Endothelial cell of umbilical vein (primary cell): ENCODE measurements at regions of chr5 and their contacts with region 1.

Region 1: GRCh38 chr5:178496642-178497041 is 93.6 kb downstream of the COL23A1 start:
- DNase-seq: peak; percentile 64
- H3K4me3 ChIP-seq: no peak overlapping the region
- H3K27ac ChIP-seq: peak overlapping the region; percentile 70
- H3K4me1 ChIP-seq: peaks cover 9% of the 10 kb centered on the region
- H3K27me3 ChIP-seq: no peaks in the 10 kb centered on the region
- CTCF ChIP-seq: no peak
- POLR2A ChIP-seq: no peak

Region 2: DNA sequence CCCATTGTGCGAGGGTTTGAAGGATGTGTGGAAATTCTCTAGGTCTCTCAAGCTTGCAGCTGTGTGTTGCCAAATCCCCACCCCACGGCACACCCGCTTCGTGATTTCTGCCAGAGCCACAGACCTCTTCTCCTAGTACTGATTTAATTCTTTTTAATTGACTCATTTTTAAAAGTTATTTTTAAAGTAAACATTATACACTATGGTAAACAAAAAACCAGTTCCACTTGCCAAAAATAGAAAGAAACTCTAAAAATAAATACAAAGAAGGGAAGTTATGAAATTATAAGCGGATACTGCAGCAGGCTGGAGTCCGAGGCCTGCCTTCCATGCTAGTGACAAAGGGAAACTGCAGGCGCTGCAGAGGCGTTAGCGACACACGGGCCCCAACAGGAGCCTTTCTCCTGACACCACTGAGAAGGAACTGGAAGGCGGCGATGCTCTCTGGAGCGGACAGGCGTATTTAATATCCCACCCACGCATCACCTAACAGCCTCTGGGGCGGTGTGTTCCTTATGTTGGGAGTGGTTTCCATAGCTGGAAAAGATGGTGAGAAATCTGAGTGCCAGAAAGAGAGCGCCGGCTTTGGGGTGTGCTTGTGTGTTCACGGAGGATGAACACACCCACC is 29.0 kb before region 1 on chr5:
- CTCF ChIA-PET with region 1: no interaction called
- POLR2A ChIA-PET with region 1: no interaction called
- dilution Hi-C with region 1: no loop called
- intact Hi-C with region 1: loop called (anchors 1 kb)
- DNase-seq: peak; percentile 29
- H3K4me3 ChIP-seq: no peak overlapping the region
- H3K27ac ChIP-seq: no peak overlapping the region
- H3K4me1 ChIP-seq: no peaks in the 10 kb centered on the region
- H3K27me3 ChIP-seq: no peaks in the 10 kb centered on the region
- CTCF ChIP-seq: no peak
- POLR2A ChIP-seq: no peak

Region 3: GRCh38 chr5:178551059-178551458 is 54.4 kb after region 1 on chr5:
- CTCF ChIA-PET with region 1: no interaction called
- POLR2A ChIA-PET with region 1: no interaction called
- dilution Hi-C with region 1: no loop called
- intact Hi-C with region 1: loop called (anchors 1 kb)
- DNase-seq: peak; percentile 28
- H3K4me3 ChIP-seq: no peak overlapping the region
- H3K27ac ChIP-seq: no peak overlapping the region
- H3K4me1 ChIP-seq: peaks cover 5% of the 10 kb centered on the region
- H3K27me3 ChIP-seq: no peaks in the 10 kb centered on the region
- CTCF ChIP-seq: peak in 1 of 2 donors; percentile 22
- POLR2A ChIP-seq: no peak

Region 4: GRCh38 chr5:178590141-178590923 is 93.7 kb after region 1 on chr5 and contains the start of gene COL23A1:
- CTCF ChIA-PET with region 1: no interaction called
- POLR2A ChIA-PET with region 1: no interaction called
- dilution Hi-C with region 1: no loop called
- intact Hi-C with region 1: no loop called
- DNase-seq: peak; percentile 55
- H3K4me3 ChIP-seq: peak within 1 kb of the TSS in 1 of 3 experiments; percentile 29
- H3K27ac ChIP-seq: no peak within 1 kb of the TSS
- H3K4me1 ChIP-seq: peaks cover 6% of the 10 kb centered on the region
- H3K27me3 ChIP-seq: peaks cover 39 to 58% of the 10 kb centered on the region in 2 experiments
- CTCF ChIP-seq: peak; percentile 72 to 77
- POLR2A ChIP-seq: no peak
- total RNA-seq, gene COL23A1: not detected in 2 replicates

Region 5: DNA sequence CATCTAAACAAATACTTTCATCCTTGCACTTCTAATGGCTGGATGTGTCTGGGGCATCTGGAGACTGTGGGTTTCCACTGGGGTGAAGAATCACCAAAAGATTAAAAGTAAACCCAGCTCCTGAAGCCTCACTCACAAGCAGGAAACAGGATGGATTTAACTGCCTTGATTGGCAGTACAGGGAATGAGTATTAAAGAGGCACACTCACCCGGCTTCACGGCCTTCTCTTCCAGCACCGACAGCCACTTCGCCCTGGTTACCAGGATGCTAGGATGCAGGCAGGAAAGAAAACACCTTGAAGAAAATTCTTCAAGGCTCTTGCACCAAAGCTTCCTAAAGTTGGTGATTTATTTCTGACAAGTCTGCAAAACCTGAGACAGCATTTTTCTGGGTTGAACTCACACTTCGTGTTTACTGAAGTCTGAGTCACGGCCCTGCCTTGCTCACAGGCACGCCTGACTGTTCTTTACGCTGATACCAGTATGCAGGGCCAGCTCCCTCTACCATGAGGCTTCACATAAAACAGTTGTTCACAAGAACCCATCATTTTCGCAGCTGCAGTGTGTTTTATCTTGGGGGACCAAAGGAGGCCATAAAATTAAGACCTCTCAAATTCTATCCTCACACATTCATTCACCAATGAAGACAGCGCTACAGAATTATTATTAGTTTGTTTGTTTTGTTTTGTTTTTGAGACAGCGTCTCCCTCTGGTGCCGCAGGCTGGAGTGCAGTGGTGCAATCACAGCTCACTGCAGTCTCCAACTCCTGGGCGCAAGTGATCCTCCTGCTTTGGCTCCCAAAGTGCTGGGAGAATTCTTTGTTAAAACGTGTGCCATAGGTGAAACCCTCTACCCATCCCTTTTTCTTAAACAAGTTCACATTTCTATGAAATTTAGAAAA is 290.5 kb after region 1 on chr5:
- CTCF ChIA-PET with region 1: no interaction called
- POLR2A ChIA-PET with region 1: no interaction called
- dilution Hi-C with region 1: no loop called
- intact Hi-C with region 1: no loop called
- DNase-seq: no peak
- H3K4me3 ChIP-seq: no peak overlapping the region
- H3K27ac ChIP-seq: no peak overlapping the region
- H3K4me1 ChIP-seq: no peaks in the 10 kb centered on the region
- H3K27me3 ChIP-seq: no peaks in the 10 kb centered on the region
- CTCF ChIP-seq: no peak
- POLR2A ChIP-seq: no peak